ENCODE measurements at regions of chr10 and their contacts with region 1.

Region 1: DNA sequence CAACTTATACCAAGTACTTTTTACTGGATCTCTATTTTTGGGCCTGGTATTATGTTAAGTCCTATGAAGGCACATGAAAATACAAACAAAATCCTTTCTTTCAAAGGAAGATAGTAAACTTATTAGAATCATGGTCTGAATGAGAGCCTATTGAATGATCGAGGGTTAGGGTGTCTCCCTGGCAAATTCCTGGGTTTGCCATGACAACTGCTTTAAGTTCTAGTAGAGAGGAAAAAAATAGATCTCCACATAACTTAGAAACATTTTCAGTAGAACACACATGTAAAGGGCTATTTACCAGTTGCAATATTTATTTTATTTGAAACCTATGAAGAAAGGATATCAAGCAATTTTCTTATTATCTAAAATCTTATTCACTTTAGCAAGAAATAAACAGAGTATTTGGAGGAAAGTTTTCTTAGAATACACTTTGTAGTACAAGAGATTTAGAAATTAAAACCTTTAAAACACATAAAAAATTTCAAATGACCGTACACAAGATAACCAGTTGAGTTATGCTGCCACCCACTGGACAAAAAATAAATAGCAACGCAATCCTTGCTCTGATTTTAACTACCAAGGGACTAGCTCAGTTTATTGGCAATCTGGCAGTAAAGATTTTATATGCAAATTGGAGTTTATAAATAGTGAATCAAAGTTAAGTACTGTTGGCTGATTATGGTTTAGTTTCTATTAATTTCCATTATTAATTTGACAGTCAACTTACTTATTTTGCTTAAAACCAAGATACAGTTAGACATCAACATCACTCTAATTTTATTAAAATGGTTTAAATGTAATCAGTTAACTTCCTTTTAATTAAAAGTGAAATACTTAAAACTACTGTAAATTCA is 33.9 kb downstream of the CACUL1 start:
- DNase-seq: peak; percentile 49
- H3K4me3 Mint-ChIP-seq: no peak overlapping the region
- H3K27ac Mint-ChIP-seq: no peak overlapping the region
- H3K4me1 Mint-ChIP-seq: peaks cover 4% of the 10 kb centered on the region
- H3K27me3 Mint-ChIP-seq: no peaks in the 10 kb centered on the region
- CTCF ChIP-seq: peak; percentile 36

Region 2: DNA sequence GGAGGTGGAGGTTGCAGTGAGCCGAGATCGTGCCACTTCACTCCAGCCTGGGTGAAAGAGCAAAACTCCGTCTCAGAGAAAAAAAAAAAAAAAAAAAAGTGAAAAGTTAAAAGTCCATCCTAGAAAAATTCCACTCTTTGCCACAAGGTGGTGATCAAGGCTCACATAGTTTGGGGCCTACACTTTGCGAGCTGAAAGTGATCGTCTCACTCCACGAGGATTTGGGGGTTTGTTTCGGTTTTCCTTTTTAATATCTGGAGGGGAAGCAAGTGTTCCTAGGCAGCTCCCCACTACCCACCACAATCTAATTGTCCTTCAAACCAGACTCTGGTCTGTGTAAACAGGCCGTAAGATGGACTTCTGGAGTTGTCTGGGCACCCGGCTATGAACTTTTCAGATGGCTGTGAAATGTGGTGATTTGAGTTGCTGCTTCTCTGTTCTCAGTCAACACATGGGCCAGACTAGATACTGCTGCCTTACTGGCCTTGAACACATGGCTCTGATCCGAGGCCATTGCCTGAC is 152.5 kb before region 1 on chr10:
- CTCF ChIA-PET with region 1: interaction called, 9 read pairs
- intact Hi-C with region 1: loop called (anchors 1 kb)
- DNase-seq: peak; percentile 45
- H3K4me3 Mint-ChIP-seq: no peak overlapping the region
- H3K27ac Mint-ChIP-seq: no peak overlapping the region
- H3K4me1 Mint-ChIP-seq: no peaks in the 10 kb centered on the region
- H3K27me3 Mint-ChIP-seq: peaks cover 29% of the 10 kb centered on the region
- CTCF ChIP-seq: peak; percentile 19

Region 3: GRCh38 chr10:118800920-118801319 is 80.0 kb after region 1 on chr10:
- CTCF ChIA-PET with region 1: no interaction called
- intact Hi-C with region 1: loop called (anchors 5 kb)
- DNase-seq: peak; percentile 52
- H3K4me3 Mint-ChIP-seq: no peak overlapping the region
- H3K27ac Mint-ChIP-seq: no peak overlapping the region
- H3K4me1 Mint-ChIP-seq: no peaks in the 10 kb centered on the region
- H3K27me3 Mint-ChIP-seq: peaks cover 12% of the 10 kb centered on the region
- CTCF ChIP-seq: no peak

Measured in Calu3 (cell line).